ENCODE measurements at regions of chr3 and their contacts with region 1.

Region 1: GRCh38 chr3:185942907-185943759 is 5.3 kb upstream of the TRA2B start:
- DNase-seq: peak; percentile 66
- H3K4me3 ChIP-seq: no peak overlapping the region
- H3K27ac ChIP-seq: no peak overlapping the region
- H3K4me1 ChIP-seq: no peaks in the 10 kb centered on the region
- H3K27me3 ChIP-seq: peaks cover 6 to 13% of the 10 kb centered on the region in 2 experiments
- CTCF ChIP-seq: peak; percentile 97 to 99
- POLR2A ChIP-seq: no peak

Region 2: GRCh38 chr3:185677146-185677829 is 265.8 kb before region 1 on chr3:
- CTCF ChIA-PET with region 1: interaction called, 12 read pairs
- POLR2A ChIA-PET with region 1: no interaction called
- dilution Hi-C with region 1: no loop called
- intact Hi-C with region 1: no loop called
- DNase-seq: peak; percentile 81
- H3K4me3 ChIP-seq: no peak overlapping the region
- H3K27ac ChIP-seq: peak overlapping the region; percentile 36
- H3K4me1 ChIP-seq: peaks cover 7% of the 10 kb centered on the region
- H3K27me3 ChIP-seq: no peaks in the 10 kb centered on the region
- CTCF ChIP-seq: peak; percentile 67 to 70
- POLR2A ChIP-seq: no peak

Region 3: GRCh38 chr3:185929192-185930151 is 13.7 kb before region 1 on chr3:
- CTCF ChIA-PET with region 1: interaction called, 23 read pairs
- POLR2A ChIA-PET with region 1: interaction called, 9 read pairs
- dilution Hi-C with region 1: no loop called
- intact Hi-C with region 1: no loop called
- DNase-seq: peak; percentile 76
- H3K4me3 ChIP-seq: peak overlapping the region in 1 of 3 experiments; percentile 35
- H3K27ac ChIP-seq: peak overlapping the region; percentile 4
- H3K4me1 ChIP-seq: peaks cover 74% of the 10 kb centered on the region
- H3K27me3 ChIP-seq: no peaks in the 10 kb centered on the region
- CTCF ChIP-seq: no peak
- POLR2A ChIP-seq: peak; percentile 48

Region 4: GRCh38 chr3:185976977-185977678 is 34.0 kb after region 1 on chr3:
- CTCF ChIA-PET with region 1: interaction called, 45 read pairs
- POLR2A ChIA-PET with region 1: no interaction called
- dilution Hi-C with region 1: no loop called
- intact Hi-C with region 1: loop called (anchors 2 kb)
- DNase-seq: peak; percentile 75
- H3K4me3 ChIP-seq: no peak overlapping the region
- H3K27ac ChIP-seq: no peak overlapping the region
- H3K4me1 ChIP-seq: peaks cover 6% of the 10 kb centered on the region
- H3K27me3 ChIP-seq: no peaks in the 10 kb centered on the region
- CTCF ChIP-seq: peak; percentile 85 to 93
- POLR2A ChIP-seq: no peak

Region 5: DNA sequence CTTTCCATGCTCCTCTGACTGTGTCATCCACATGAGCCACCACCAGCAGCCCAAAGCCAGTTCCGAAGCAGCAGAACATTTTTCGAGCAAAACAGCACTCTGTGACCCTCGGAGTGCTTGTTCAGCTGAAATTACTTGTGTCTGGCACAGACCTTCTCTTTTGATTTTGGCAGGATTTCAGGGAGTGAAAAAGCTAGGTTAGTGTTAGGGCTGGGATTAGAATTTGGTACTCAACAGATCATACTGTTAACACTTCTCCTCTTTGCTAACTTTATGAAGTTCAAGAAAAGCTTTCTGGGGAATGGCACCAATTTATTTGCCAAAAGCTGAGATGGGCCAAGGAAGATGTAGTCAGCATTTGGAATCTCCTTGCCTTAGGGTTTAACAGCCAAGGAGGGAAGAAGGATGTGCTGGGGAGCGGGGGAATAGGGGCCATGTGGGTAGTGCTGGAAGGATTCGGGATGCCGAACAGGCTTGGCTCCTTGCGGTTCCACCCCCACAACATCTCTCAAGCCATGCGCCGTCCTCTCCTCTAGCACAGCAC is 49.8 kb after region 1 on chr3:
- CTCF ChIA-PET with region 1: no interaction called
- POLR2A ChIA-PET with region 1: no interaction called
- dilution Hi-C with region 1: no loop called
- intact Hi-C with region 1: no loop called
- DNase-seq: no peak
- H3K4me3 ChIP-seq: no peak overlapping the region
- H3K27ac ChIP-seq: no peak overlapping the region
- H3K4me1 ChIP-seq: no peaks in the 10 kb centered on the region
- H3K27me3 ChIP-seq: peaks cover 2% of the 10 kb centered on the region in 2 experiments
- CTCF ChIP-seq: no peak
- POLR2A ChIP-seq: no peak

Region 6: GRCh38 chr3:186277268-186277909 is 334.3 kb after region 1 on chr3:
- CTCF ChIA-PET with region 1: interaction called, 34 read pairs
- POLR2A ChIA-PET with region 1: no interaction called
- dilution Hi-C with region 1: no loop called
- intact Hi-C with region 1: loop called (anchors 1 kb)
- DNase-seq: peak; percentile 49
- H3K4me3 ChIP-seq: no peak overlapping the region
- H3K27ac ChIP-seq: no peak overlapping the region
- H3K4me1 ChIP-seq: no peaks in the 10 kb centered on the region
- H3K27me3 ChIP-seq: peaks cover 0 to 3% of the 10 kb centered on the region in 2 experiments
- CTCF ChIP-seq: peak; percentile 20 to 41
- POLR2A ChIP-seq: no peak